OCI-LY7 (cell line): ENCODE measurements at regions of chr1 and their contacts with region 1.

Region 1: DNA sequence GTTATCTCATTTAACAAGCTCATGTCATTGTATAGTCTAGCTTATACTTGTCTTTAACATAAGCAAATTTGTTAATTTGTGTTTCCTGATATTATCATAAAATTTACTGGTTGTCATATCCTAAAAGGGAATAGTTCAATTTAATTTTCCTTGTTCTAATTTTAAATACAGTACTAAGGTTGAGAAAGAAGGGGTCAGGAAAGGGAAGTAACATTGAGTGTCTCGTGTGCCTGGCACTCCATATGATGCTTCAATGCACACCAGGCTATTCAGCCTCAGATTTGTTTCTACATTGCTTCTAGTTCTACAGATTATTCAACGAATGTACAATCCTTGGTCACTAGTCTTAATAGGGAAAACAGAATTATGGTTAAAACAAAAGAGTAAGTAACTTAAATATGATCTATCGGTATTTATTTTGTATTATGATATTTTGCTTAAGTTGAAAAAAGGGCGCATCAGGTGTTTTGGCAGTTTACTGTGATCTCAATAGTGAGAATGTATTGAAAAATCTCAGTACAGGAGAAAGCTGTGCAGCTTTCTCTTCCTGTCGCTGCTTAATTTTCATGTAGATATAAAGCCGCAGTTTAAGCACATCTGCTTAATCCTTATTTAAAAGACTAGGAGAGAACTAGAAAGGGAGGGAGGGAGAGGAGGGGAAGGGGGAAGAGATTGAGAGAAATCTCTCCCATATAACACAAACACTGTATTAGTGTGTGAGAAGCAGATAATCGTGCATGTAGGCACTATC is 13.0 kb downstream of the PTPRC start:
- DNase-seq: peak; percentile 65
- H3K4me3 ChIP-seq: peak overlapping the region; percentile 62
- H3K27ac ChIP-seq: peak overlapping the region; percentile 87
- H3K4me1 ChIP-seq: peaks cover 98% of the 10 kb centered on the region
- CTCF ChIP-seq: no peak

Region 2: DNA sequence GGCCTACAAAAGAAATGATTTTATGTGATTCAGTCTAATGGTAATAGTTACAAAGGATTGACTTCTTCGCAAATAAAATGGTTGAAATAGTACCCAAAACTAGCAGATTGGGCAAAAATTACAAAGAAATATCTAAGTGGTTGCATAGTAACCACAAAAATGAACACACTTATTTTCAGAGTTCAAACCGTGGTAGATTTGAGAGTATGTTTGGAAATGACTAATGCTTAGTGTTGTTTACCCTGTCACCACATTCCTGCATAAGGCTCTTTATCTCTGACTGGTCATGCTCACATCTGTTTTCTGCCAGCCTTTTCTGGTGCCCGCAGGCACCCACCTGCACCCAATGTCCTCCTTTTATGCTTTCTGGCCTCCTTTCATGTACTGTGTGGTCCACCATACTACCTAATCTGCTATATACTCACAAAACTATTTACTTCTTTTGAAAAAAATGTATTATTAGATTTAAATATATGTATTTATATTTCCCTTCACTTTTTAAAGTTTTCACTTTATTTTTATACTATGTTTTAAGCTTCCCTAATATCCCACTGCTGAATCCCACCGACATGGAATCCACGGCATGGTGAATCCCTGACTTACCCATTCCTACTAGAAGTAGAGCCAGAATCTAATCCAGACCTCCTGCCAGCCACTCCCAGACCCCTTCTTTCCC is 17.3 kb after region 1 on chr1:
- CTCF ChIA-PET with region 1: no interaction called
- POLR2A ChIA-PET with region 1: interaction called, 12 read pairs
- intact Hi-C with region 1: no loop called
- DNase-seq: no peak
- H3K4me3 ChIP-seq: no peak overlapping the region
- H3K27ac ChIP-seq: no peak overlapping the region
- H3K4me1 ChIP-seq: peaks cover 85% of the 10 kb centered on the region
- CTCF ChIP-seq: no peak